Activated CD8-positive, alpha-beta T cell treated with anti-CD3 and anti-CD28 coated beads, Interleukin-2, amount 10 ng/mL, durations not matched to agents 7 days and 5 days (primary cell): ENCODE measurements at regions of chr7 and their contacts with region 1.

Region 1: DNA sequence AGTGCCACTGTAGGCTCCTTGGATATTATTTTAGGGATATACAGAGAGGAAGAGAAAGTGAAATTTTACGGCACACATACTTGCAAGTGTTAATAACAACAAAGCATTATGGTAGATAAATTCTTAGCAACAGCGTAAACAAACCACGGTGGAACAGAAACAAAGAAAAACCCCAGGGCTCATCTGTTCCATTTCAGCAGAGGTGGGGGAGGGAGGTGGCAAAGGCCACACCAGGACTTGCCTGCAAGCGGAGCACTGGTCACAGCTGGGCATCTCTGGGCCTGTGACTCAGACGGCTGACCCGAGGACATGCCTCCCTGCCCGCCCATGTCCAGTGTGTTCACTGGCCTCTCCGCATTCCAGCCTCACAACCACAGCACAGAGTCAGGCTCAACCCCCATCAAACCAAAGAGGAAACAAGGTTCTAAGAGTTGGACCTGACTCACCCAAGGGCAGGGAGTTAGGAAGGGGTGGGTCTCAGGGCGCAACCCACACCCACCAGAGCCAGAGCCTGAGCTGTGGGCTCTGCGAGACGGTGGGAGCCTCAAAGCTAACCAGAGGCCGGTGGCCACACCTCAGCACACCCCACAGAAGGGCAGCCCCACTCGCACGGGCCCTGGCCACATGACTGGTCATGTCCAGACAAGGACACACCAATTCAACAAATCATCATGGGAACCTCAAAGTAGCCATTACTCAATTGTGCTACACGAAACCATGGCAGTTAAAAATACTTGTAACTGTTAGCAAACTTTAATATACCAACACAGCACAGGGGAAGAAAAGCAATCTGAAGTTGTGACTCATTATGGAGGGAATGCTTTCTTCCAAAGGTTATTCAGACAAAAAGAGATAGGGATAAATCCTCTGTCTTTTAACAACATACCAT is 10.7 kb downstream of the ESYT2 start:
- DNase-seq: peak; percentile 87
- ATAC-seq: peak; percentile 76
- H3K4me3 Mint-ChIP-seq: peak overlapping the region; percentile 81
- H3K27ac Mint-ChIP-seq: peak overlapping the region; percentile 95
- H3K4me1 Mint-ChIP-seq: peaks cover 93% of the 10 kb centered on the region
- H3K27me3 Mint-ChIP-seq: no peaks in the 10 kb centered on the region

Region 2: GRCh38 chr7:158863611-158864506 is 45.3 kb after region 1 on chr7:
- CTCF ChIA-PET with region 1: no interaction called
- POLR2A ChIA-PET with region 1: interaction called, 15 read pairs
- DNase-seq: peak; percentile 72
- ATAC-seq: peak; percentile 63
- H3K4me3 Mint-ChIP-seq: peak overlapping the region; percentile 78
- H3K27ac Mint-ChIP-seq: peak overlapping the region; percentile 91
- H3K4me1 Mint-ChIP-seq: peaks cover 62% of the 10 kb centered on the region
- H3K27me3 Mint-ChIP-seq: no peaks in the 10 kb centered on the region